Activated CD4-positive, alpha-beta T cell treated with anti-CD3 and anti-CD28 coated beads, Interleukin-2, amount 10 ng/mL, durations not matched to agents 24 days and 14 days (primary cell): ENCODE measurements at regions of chr20 and their contacts with region 1.

Region 1: DNA sequence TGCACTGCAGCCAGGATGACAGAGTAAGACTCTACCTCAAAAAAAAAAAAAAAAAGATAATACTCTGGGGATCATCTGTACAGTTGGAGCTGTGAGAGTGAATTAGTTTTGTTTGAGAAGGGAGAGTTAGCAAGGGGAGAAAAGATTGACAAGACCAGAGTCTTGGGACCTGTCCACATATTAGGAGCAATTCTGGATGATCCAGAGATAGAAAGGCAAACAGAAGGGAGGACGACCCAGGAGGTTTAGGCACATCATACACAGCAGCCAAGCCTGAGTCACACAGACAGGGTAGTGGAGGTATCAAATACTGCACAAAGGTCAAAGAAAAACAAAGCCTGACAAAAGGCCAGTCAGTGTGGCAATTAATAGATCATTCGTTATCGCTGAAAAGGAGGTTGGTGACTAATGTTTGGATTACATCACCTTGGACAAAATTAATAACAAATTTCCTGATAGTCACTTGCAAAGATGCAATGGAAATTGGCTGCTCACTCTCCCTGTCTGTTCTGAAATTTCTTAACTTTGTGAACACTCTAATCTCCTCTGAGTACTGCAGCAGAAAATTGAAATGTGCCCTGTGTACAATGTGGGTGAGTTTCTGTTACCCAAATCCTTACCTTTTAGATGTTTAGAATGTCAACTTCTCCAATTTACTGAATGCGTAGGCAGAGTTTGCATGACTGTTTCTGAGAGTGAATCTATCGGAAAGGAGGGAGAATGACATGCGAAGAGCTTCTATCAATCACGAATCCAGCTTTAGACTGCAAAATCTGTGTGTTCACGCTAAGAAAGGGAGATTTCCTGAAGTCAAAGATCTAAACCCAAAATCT is 105.4 kb downstream of the TSHZ2 start:
- DNase-seq: peak; percentile 68
- H3K4me3 Mint-ChIP-seq: no peak overlapping the region
- H3K27ac Mint-ChIP-seq: no peak overlapping the region
- H3K4me1 Mint-ChIP-seq: peaks cover 37% of the 10 kb centered on the region
- H3K27me3 Mint-ChIP-seq: no peaks in the 10 kb centered on the region

Region 2: DNA sequence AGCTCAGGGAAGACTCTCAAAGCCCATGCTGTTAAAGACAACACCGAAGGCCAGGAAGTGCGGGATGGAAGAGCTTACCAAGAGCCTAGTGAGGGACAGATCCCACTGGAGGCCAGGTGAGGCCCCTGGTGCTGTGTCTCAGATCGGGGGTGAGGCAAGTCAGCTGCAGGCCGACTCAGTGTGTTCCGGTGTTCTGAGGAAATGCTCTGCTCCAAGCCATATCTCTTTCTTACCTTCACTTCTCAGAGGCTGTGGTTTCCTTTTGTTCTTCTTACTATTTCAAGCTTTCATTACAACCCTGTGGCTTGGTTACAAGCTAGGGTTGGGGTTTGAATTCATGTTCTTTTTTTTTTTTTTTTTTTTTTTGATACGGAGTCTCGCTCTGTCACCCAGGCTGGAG is 771.7 kb before region 1 on chr20:
- intact Hi-C with region 1: loop called (anchors 10 kb)
- DNase-seq: peak; percentile 76
- H3K4me3 Mint-ChIP-seq: peak overlapping the region; percentile 6
- H3K27ac Mint-ChIP-seq: peak overlapping the region; percentile 59
- H3K4me1 Mint-ChIP-seq: peaks cover 20% of the 10 kb centered on the region
- H3K27me3 Mint-ChIP-seq: peaks cover 2% of the 10 kb centered on the region

Region 3: DNA sequence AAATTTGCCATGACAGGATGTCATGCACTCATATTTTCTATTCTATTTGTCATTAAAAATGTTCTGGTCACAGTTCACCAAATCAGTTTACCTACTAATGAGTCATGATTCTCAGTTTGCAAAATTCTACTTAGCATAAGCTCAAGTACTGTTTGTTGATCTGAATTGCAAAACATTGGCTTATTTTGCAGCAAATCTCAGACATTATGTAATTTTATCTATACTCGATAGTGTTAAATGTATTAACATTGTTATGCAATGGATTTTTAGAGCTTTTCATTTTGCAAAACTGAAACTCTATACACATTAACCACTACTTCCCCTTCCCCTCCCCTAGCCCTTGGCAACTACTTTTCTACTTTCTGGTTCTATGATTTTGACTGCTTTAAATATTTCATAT is 672.2 kb before region 1 on chr20:
- intact Hi-C with region 1: loop called (anchors 5 kb)
- DNase-seq: no peak
- H3K4me3 Mint-ChIP-seq: no peak overlapping the region
- H3K27ac Mint-ChIP-seq: peak overlapping the region; percentile 65
- H3K4me1 Mint-ChIP-seq: peaks cover 47% of the 10 kb centered on the region
- H3K27me3 Mint-ChIP-seq: no peaks in the 10 kb centered on the region

Region 4: GRCh38 chr20:53021934-53022333 is 55.7 kb before region 1 on chr20:
- intact Hi-C with region 1: loop called (anchors 1 kb)
- DNase-seq: peak; percentile 80
- H3K4me3 Mint-ChIP-seq: peak overlapping the region; percentile 65
- H3K27ac Mint-ChIP-seq: peak overlapping the region; percentile 85
- H3K4me1 Mint-ChIP-seq: peaks cover 71% of the 10 kb centered on the region
- H3K27me3 Mint-ChIP-seq: no peaks in the 10 kb centered on the region

Region 5: DNA sequence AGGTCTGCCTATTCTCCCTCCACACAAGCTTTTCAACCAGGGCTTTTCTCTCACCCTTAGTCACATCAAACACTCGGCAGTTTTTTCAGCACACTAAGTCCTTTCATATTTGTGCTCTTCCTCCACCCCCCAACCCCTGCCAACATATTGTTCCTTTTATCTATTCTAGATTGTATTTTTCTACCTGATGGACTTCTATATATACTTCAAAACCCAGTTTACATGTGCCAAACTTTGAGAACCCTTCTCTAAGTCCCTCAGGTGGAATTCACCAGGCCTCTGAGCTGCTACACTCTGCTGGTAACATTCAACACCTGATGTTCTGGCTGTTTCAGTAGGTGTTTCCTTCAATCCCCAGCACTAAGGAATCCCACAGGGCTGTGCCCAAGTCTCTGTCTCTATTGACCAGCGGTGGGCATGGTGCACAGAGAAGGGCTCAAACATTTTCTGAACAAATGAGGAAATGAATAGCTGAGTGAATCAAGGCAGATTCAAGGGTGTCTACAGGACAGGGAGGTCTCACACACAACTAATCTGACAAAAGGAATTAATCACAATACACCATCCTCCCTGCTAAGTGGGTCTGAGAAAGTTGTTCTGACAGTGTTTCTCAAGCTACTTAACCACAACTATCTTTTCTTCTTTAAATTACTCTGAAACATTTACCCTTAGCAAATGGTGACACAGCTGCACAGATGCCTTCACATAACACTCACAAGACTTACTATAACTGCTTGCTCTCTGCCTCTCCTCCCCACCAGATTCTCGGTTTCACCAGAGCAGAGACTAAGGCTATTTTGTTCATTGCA is 61.1 kb after region 1 on chr20:
- intact Hi-C with region 1: no loop called
- DNase-seq: no peak
- H3K4me3 Mint-ChIP-seq: peak overlapping the region; percentile 25
- H3K27ac Mint-ChIP-seq: peak overlapping the region; percentile 71
- H3K4me1 Mint-ChIP-seq: peaks cover 30% of the 10 kb centered on the region
- H3K27me3 Mint-ChIP-seq: no peaks in the 10 kb centered on the region